Activated T-helper 1 cell treated with anti-CD3 and anti-CD28 coated beads, Interleukin-12 subunit alpha, Interleukin-12 subunit beta, Interleukin-2, Interleukin-4 antibody, amounts not matched to agents 30 ng/mL and 10 ng/mL and 1 ng/mL, durations not matched to agents 14 hours and 24 hours and 36 hours (primary cell): ENCODE measurements at regions of chr7 and their contacts with region 1.

Region 1: GRCh38 chr7:149714050-149714909 is 59.1 kb downstream of the ZNF467 start:
- DNase-seq: peak; percentile 79
- H3K4me3 Mint-ChIP-seq: peak overlapping the region; percentile 74
- H3K27ac Mint-ChIP-seq: peak overlapping the region; percentile 68
- H3K4me1 Mint-ChIP-seq: peaks cover 13% of the 10 kb centered on the region
- H3K27me3 Mint-ChIP-seq: peaks cover 4% of the 10 kb centered on the region

Region 2: DNA sequence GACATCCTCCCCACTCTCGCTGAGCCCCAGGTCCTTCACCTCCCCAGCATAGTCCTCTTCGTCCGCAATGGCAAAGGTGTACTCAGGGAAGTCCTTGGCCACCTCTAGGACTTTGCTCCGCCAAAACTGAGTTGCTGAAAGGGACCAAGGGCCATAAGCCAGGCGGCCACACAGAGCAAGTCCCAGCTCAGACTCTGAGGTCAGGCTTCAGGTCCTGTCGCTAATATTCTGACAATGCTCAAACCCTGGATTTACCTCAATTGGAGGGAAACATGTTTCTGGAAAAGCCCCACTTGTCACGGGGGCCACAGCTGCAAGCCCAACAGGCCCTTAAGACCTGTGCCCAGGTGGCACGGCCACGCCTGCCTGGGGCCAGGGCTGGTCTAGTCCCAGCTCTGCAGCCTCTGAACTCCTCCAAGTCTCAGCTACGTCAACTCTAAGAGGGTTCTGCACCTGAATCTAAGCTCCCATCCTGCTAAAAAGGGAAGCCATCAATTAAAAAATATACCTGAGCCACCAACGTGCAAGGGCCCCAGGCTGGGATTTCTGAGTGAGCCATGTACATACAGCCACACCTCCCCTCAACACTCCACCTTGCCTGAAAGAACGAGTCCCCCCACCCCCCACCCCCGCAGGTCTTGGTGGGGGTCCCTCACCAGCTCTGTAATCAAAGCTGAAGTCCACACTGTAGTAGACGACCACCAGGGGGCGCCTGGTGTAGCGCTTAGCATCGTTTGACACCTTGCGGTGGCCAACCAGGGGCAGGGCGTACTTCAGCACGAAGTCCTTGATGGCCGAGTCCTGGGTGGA is 708.8 kb before region 1 on chr7:
- intact Hi-C with region 1: no loop called
- DNase-seq: peak; percentile 65
- H3K4me3 Mint-ChIP-seq: no peak overlapping the region
- H3K27ac Mint-ChIP-seq: no peak overlapping the region
- H3K4me1 Mint-ChIP-seq: no peaks in the 10 kb centered on the region
- H3K27me3 Mint-ChIP-seq: no peaks in the 10 kb centered on the region

Region 3: DNA sequence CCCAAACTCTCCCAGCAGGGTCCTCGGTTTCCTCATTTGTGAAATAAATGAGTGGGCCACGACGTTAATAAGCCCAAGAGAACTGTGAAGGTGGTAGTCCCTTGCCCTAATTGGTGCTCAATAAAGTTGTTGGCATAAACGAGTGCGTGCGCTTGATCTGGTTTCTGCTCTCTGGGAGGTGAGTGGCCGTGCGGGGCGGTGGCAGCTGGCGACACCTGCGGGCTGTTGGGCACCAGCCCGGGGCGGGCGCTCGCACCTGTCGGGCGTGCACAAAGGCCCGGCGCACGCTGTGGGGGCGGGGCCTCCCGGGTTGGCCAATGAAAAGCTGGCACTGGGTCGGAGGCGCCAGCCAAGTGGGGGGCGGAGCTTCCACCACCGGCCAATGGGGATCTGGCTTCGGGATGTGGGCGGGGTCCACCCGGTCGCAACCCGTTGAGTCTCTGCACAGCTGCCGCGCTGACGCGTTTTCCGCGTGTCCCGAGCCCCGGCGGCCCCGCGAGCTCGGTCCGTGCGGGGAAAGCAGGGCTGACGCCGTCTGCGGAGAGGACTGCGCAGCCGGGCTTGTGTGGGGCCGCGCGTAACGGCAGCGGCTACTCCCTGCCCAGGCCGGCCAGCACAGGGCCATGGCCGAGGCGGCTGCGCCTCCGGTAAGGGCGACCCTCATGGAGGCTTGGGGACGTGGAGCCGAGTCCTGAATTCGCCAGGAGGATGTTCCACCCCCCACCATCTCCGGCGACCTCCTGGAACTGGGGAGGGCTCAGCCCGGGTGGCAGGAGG is 429.2 kb before region 1 on chr7:
- intact Hi-C with region 1: loop called (anchors 10 kb)
- DNase-seq: peak; percentile 98
- H3K4me3 Mint-ChIP-seq: peak overlapping the region; percentile 94
- H3K27ac Mint-ChIP-seq: peak overlapping the region; percentile 52
- H3K4me1 Mint-ChIP-seq: peaks cover 33% of the 10 kb centered on the region
- H3K27me3 Mint-ChIP-seq: no peaks in the 10 kb centered on the region

Region 4: DNA sequence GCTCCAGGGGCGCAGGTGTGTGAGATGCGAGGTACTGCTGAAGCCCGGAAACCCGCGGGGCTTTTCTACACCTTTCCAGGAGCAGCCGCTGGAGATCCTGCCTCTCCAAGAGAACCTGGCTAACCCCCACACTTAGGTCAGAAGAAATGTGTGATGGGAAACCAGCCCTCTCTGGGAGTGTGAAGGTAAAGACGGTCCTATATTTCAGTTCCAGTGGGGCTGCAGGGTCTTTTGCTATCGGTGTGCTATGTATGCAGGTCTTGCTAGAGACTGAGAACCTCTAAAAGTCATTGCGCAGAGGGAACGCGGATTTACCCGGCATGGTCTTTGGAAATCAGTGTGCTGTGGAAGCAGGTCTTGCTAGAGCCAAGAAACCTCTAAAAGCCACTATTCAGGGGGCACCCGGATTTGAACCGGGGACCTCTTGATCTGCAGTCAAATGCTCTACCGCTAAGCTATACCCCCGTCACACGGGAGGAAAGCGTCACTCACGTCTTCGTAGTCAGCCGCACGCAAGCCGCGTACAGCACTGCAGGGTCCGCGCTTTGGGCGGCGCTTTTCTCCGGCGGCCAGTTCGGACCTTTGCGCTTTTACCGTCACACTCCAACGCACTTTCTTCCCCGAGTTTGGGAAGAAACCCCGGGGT is 299.4 kb before region 1 on chr7:
- intact Hi-C with region 1: no loop called
- DNase-seq: peak; percentile 14
- H3K4me3 Mint-ChIP-seq: peak overlapping the region; percentile 64
- H3K27ac Mint-ChIP-seq: peak overlapping the region; percentile 87
- H3K4me1 Mint-ChIP-seq: peaks cover 14% of the 10 kb centered on the region
- H3K27me3 Mint-ChIP-seq: peaks cover 28% of the 10 kb centered on the region

Region 5: DNA sequence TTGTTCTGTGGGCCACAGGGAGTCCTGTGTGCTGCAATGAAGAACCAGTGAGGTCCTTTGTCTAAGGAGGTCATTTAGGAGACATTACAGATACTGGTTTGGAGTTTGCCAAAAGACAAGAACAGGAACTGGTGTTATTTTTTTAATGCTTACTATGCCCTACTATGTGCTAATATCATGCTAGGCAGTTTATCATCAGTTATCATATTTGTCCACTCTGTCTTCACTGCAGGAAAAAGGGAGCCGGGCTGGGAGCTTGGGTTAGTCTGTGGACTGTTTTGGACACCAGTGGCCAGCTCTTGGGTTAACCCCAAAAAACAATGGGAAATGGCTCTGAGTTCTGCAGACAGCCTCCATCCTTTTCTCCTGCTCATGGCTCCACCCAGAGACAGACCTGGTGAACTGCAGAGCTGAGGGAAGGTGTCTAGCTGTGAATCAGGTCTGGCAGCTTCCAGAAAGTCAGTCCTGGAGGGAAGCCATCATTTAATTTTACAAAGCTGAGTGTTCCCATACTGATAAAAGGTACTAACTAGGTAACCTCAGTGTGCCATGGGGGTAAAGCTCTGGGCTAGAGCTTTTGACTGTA is 115.5 kb before region 1 on chr7:
- intact Hi-C with region 1: loop called (anchors 1 kb)
- DNase-seq: peak; percentile 9
- H3K4me3 Mint-ChIP-seq: no peak overlapping the region
- H3K27ac Mint-ChIP-seq: no peak overlapping the region
- H3K4me1 Mint-ChIP-seq: peaks cover 32% of the 10 kb centered on the region
- H3K27me3 Mint-ChIP-seq: peaks cover 4% of the 10 kb centered on the region

Region 6: DNA sequence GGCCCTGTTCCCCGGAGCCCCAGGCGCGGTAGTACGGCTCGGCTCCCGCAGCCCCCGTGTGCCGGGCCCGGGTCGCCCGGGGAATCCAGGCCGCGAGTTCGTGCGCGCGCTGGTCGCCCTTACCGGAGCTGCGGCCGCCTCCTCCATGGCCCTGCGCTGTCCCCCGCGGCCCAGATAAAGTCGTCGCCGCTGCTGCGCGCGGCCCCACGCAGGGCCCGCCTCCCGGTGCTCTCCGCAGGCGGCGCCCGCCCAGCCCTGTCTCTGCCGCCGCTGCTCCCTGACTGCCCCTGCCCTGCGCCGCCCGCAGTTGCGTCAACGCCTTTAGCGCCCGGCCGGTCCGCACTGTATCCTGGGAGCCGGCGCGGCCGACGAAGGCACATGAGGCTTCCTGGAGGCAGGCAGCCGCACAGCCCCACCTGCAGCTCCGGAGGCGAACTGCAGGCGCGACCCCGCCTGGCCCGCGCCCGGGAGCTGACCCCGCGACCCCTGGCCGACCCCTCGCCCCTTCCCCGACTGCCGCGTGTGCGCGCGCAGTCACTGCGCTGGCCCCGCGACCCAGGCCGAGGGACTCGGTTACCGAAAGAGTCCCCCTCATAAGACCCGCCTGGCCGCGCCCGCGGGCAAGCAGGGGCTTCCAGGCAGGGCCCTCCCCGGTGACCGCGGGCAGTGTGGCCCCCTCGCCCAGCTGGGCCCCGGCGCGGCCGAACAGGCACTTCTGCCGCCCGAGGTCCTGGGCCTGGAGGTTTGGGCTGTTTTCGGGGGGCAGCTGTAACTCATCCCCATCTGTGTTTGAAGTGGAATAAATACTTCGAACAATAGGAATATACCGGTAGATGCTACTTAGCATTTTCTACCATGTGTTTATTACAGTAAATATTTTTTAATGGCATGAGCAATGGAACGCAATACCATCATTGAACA is 89.6 kb before region 1 on chr7:
- intact Hi-C with region 1: loop called (anchors 1 kb)
- DNase-seq: peak; percentile 91
- H3K4me3 Mint-ChIP-seq: peak overlapping the region; percentile 89
- H3K27ac Mint-ChIP-seq: peak overlapping the region; percentile 83
- H3K4me1 Mint-ChIP-seq: peaks cover 32% of the 10 kb centered on the region
- H3K27me3 Mint-ChIP-seq: peaks cover 6% of the 10 kb centered on the region

Region 7: DNA sequence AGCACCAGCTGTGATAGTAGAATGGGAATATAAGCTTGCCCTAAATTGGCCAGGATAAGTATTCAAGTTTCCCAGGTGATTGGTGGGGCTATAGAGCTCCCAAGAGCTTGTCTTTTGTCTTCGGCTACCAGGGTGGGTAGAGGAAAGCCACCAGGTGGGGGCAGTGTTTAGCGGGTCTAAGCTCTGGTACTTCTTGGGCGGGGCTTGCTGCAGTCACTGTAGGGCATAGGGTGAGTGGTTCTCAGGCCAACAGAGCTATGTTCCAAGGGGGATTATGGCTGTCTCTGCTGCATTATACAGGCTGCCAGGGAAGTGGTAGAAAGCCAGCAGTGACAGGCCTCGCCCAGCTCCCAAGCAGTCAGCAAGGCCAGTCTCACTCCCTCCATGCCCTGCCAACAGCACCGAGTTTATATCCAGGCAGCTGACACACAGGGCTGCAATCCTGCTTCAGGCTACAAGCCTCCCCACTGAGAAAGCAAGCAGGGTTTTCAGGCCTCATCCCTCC is 51.6 kb before region 1 on chr7:
- intact Hi-C with region 1: loop called (anchors 2 kb)
- DNase-seq: peak; percentile 43
- H3K4me3 Mint-ChIP-seq: no peak overlapping the region
- H3K27ac Mint-ChIP-seq: no peak overlapping the region
- H3K4me1 Mint-ChIP-seq: no peaks in the 10 kb centered on the region
- H3K27me3 Mint-ChIP-seq: peaks cover 45% of the 10 kb centered on the region

Region 8: DNA sequence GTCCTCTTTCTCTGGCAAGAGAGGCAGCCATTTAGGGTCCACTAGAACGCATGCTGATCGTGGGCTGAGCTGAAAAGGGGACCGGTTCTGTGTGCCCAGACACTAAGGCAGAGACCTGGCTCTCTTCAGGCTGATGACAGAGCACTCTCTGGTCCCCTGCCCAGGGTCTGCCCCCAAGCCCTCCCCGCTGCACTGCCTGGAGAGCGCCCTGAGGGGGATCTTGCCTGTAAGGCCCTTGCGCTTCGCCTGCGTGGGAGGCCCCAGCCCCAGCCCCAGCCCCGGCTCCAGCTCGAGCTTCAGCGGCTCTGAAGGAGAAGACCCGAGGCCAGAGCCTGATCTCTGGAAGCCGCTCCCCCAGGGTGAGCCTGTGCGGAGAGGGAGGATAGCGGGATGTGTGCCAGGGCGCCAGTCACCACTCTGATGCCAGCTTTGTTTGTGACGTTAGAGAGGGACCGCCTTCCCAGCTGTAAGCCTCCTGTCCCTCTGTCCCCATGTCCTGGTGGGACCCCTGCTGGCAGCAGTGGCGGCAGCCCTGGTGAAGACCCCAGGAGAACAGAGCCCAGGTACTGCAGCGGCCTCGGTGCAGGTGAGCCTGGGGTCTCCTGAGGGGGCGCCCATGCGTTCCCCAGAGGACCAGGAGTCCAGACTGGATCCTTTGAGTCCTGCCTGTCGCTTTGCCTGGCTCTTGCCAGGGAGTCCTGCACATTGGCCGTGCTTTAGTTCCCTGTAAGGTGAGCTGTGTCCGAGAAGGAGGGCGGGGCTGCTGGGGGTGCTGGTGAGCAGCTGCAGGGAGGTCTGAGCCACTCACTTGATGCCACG is 15.9 kb after region 1 on chr7:
- intact Hi-C with region 1: no loop called
- DNase-seq: no peak
- H3K4me3 Mint-ChIP-seq: no peak overlapping the region
- H3K27ac Mint-ChIP-seq: no peak overlapping the region
- H3K4me1 Mint-ChIP-seq: no peaks in the 10 kb centered on the region
- H3K27me3 Mint-ChIP-seq: no peaks in the 10 kb centered on the region

Region 9: DNA sequence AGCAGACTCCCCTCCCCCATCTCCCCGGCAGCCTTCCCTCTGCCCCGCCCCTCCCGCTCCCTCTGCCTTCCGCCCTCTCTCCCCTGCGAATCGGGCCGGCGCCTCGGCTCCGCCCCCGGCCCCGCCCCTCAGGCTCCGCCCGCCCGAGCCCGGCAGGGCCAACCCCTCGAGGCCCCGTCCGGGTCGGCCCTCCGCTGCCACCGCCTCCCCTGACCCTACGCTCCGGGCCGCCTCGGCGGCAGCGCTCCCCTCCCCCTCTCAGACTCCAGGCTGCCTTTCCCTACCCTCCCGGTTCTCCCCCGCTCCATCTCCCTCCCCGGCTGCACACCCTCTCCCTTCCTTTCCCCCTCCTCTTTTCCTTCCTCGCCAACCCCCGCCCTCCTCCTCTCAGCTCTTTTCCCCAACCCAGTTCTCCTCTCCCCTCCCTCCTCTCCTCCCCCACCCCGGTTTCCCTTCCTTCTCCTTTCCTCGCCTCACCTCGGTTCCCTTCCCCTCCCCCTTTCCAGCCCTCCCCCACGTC is 57.5 kb after region 1 on chr7:
- intact Hi-C with region 1: loop called (anchors 1 kb)
- DNase-seq: peak; percentile 83
- H3K4me3 Mint-ChIP-seq: peak overlapping the region; percentile 82
- H3K27ac Mint-ChIP-seq: no peak overlapping the region
- H3K4me1 Mint-ChIP-seq: no peaks in the 10 kb centered on the region
- H3K27me3 Mint-ChIP-seq: peaks cover 28% of the 10 kb centered on the region

Region 10: DNA sequence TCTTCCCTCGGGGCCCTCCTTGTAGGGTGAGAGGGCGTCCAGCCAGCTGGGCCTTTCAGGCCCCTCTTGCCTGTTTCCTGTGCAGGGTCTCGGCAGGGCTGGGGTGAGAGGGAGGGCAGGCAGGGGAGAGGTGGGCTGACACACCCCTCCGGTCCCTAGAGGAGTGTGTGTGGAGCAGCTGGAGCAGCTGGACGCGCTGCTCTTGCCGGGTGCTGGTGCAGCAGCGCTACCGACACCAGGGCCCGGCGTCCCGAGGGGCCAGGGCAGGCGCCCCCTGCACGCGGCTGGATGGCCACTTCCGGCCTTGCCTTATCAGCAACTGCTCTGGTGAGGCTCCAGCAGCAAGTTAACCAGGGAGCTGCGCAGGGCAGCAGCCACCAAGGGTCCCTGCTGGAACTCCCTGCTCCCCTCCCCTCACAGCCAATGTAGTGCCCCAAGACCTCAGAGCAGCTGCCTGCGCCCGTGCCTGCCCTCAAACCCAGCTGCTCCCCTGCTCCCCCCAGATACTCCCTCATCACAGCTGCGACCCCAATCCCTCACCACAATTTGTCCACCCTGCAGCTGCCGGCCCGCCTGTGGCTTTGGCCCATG is 108.2 kb after region 1 on chr7:
- intact Hi-C with region 1: no loop called
- DNase-seq: no peak
- H3K4me3 Mint-ChIP-seq: no peak overlapping the region
- H3K27ac Mint-ChIP-seq: no peak overlapping the region
- H3K4me1 Mint-ChIP-seq: no peaks in the 10 kb centered on the region
- H3K27me3 Mint-ChIP-seq: no peaks in the 10 kb centered on the region

Region 11: GRCh38 chr7:149873074-149873969 is 159.0 kb after region 1 on chr7 and contains the start of gene ATP6V0E2:
- intact Hi-C with region 1: loop called (anchors 1 kb)
- DNase-seq: peak; percentile 92
- H3K4me3 Mint-ChIP-seq: peak within 1 kb of the TSS; percentile 90
- H3K27ac Mint-ChIP-seq: peak within 1 kb of the TSS; percentile 92
- H3K4me1 Mint-ChIP-seq: peaks cover 75% of the 10 kb centered on the region
- H3K27me3 Mint-ChIP-seq: no peaks in the 10 kb centered on the region
- total RNA-seq, gene ATP6V0E2: 47.5 and 51.2 TPM in 2 replicates